ENCODE measurements at regions of chr22 and their contacts with region 1.

Region 1: GRCh38 chr22:20013382-20013871 is 3.2 kb downstream of the ARVCF start:
- DNase-seq: peak; percentile 47 to 85
- H3K4me3 ChIP-seq: no peak overlapping the region
- H3K27ac ChIP-seq: peak overlapping the region; percentile 21; the same call in 1 of the 2 replicates
- H3K4me1 ChIP-seq: peaks cover 0 to 8% (median 3%) of the 10 kb centered on the region in 4 experiments; a peak in 4 of 7 replicates
- H3K27me3 ChIP-seq: peaks cover 11 to 28% (median 24%) of the 10 kb centered on the region in 4 experiments
- CTCF ChIP-seq: peak; percentile 89 to 95 (median 94)
- EP300 ChIP-seq: no peak
- POLR2A ChIP-seq: no peak
- RAD21 ChIP-seq: peak; percentile 89 to 96

Region 2: GRCh38 chr22:19874307-19875060 is 138.9 kb before region 1 on chr22:
- CTCF ChIA-PET with region 1: no interaction called
- POLR2A ChIA-PET with region 1: no interaction called
- DNase-seq: peak in 1 of 2 experiments; percentile 51
- H3K4me3 ChIP-seq: no peak overlapping the region
- H3K27ac ChIP-seq: no peak overlapping the region
- H3K4me1 ChIP-seq: peaks cover 0 to 2% (median 0%) of the 10 kb centered on the region in 4 experiments; a peak in 1 of 7 replicates
- H3K27me3 ChIP-seq: no peaks in the 10 kb centered on the region
- CTCF ChIP-seq: no peak
- EP300 ChIP-seq: no peak
- POLR2A ChIP-seq: no peak; a peak in 1 of 3 replicates
- RAD21 ChIP-seq: no peak

Region 3: DNA sequence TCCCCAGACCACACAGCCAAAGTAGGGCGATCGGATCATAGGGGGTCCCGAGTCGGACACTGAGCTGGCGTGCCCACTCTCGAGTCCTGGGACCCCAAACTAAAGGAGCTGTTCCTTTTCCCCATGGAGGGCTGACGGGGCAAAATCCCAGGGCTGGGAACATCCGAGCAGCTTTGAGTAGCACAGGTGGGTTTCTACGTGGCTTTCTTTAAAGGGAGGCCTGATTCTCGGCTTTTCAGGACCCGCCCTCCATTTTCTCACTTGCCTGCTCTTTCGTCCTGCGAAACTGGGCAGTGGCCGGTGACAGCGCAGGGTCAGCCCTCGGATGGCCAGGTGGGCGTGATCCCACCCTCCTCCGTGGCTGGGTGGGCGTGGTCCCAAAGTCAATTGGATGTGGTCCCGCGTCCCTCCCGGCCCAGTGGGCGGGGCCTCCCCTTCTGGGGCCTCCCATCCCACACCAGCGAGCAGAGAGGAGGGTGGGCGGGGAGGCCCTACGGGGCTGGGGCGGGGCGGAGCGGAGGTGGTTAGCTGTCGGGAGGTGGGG is 54.3 kb before region 1 on chr22:
- CTCF ChIA-PET with region 1: interaction called, 369 read pairs
- POLR2A ChIA-PET with region 1: no interaction called
- DNase-seq: peak; percentile 81 to 98
- H3K4me3 ChIP-seq: peak overlapping the region; percentile 38 to 61 (median 52); a peak in 7 of 8 replicates
- H3K27ac ChIP-seq: no peak overlapping the region
- H3K4me1 ChIP-seq: peaks cover 0 to 23% (median 18%) of the 10 kb centered on the region in 4 experiments; a peak in 6 of 7 replicates
- H3K27me3 ChIP-seq: no peaks in the 10 kb centered on the region
- CTCF ChIP-seq: no peak
- EP300 ChIP-seq: no peak
- POLR2A ChIP-seq: peak in 1 of 2 experiments; percentile 61; a peak in 2 of 3 replicates
- RAD21 ChIP-seq: no peak

Region 4: GRCh38 chr22:19981118-19981955 is 32.1 kb before region 1 on chr22:
- CTCF ChIA-PET with region 1: interaction called, 10 read pairs
- POLR2A ChIA-PET with region 1: interaction called, 6 read pairs
- DNase-seq: no peak
- H3K4me3 ChIP-seq: no peak overlapping the region
- H3K27ac ChIP-seq: no peak overlapping the region
- H3K4me1 ChIP-seq: peaks cover 0 to 8% (median 6%) of the 10 kb centered on the region in 4 experiments; a peak in 5 of 7 replicates
- H3K27me3 ChIP-seq: no peaks in the 10 kb centered on the region
- CTCF ChIP-seq: no peak
- EP300 ChIP-seq: no peak
- POLR2A ChIP-seq: no peak
- RAD21 ChIP-seq: no peak

Region 5: DNA sequence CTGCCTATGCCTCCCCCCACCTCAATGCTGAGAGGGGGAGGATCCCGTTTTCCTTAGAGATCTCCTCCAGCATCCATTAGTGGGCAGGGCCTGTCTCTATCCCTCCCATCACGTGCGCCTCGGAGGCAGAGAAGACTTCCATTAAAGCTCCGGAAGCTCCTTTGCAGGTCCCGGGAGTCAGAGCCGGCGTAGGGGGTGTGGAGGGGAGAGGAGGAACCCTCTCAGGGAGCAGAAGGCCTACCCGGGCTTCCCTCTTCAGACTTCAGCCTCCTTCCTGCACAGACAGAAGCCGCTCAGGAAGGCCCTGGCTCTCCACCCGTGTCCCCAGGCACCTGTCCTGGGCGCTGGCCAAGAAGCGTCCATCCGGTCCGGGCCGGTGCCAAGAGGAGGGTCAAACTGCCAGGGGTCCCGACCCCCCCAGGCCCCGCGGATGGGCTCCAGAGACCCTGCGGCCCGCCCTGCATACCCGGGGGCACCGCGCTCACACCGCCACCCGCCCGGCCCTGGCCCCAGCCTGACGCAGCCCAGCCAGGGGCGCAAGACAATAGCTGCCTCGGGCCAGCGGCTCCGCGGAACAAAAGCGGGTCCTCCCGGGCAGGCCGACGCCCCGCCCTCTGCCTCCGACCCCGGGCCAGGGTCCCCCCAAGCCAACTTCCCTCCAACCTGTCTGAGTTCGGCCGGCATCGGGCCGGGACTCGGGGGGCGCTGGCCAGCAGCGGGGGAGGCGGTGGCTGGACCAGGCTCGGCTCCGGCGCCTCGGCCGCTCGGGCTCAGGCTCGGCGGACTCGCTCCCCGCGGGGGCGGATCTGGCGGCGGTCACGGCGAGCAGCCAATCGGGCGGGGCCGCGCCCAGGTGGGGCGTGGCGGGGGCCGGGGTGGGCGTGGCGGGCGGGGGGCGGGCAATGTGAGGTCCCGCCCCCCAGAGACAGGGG is 26.8 kb before region 1 on chr22:
- CTCF ChIA-PET with region 1: interaction called, 50 read pairs
- POLR2A ChIA-PET with region 1: interaction called, 6 read pairs
- DNase-seq: peak in 1 of 2 experiments; percentile 89
- H3K4me3 ChIP-seq: peak overlapping the region; percentile 74 to 88 (median 82)
- H3K27ac ChIP-seq: peak overlapping the region; percentile 57; the same call in 1 of the 2 replicates
- H3K4me1 ChIP-seq: peaks cover 0 to 17% (median 11%) of the 10 kb centered on the region in 4 experiments; a peak in 5 of 7 replicates
- H3K27me3 ChIP-seq: no peaks in the 10 kb centered on the region
- CTCF ChIP-seq: no peak
- EP300 ChIP-seq: no peak
- POLR2A ChIP-seq: peak in 1 of 2 experiments; percentile 80; a peak in 2 of 3 replicates
- RAD21 ChIP-seq: no peak

Region 6: DNA sequence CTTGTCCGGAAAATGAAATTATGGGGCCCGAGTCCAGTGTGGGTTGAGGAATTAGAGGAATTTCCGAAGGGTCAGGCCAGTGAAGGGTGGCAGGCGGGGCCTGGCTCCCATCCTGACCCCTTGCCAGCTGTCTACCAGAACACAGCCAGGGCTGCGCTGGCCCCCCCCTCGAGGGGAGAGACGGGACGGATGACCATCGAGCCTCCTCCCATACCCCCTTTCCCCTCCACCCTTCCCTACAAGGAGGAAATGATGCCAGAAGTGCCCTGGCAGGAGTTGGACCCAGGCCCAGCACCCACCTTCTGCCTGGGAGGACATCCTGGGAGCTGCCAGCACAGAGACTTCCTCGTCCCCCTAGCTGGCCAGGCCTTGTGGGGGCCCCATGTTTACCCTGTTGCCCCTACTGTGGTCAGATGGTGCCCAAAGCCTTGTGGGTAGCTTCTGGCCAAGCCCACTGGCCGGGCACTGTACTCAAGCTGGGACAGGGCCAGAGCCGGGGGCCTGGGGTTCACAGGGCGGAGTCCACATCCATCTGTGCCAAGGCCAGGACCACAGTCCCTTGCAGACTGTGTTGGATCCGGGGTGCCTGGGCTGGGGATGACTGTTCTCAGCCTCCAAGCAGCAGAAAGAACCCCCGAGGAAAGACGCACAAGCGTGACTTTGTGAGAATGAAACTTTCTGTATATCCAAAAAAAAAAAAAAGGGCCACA is 17.6 kb before region 1 on chr22:
- CTCF ChIA-PET with region 1: interaction called, 50 read pairs
- POLR2A ChIA-PET with region 1: interaction called, 4 read pairs
- DNase-seq: no peak
- H3K4me3 ChIP-seq: no peak overlapping the region
- H3K27ac ChIP-seq: no peak overlapping the region
- H3K4me1 ChIP-seq: peaks cover 4 to 30% (median 18%) of the 10 kb centered on the region in 4 experiments
- H3K27me3 ChIP-seq: no peaks in the 10 kb centered on the region
- CTCF ChIP-seq: no peak
- EP300 ChIP-seq: no peak
- POLR2A ChIP-seq: no peak
- RAD21 ChIP-seq: no peak

Region 7: DNA sequence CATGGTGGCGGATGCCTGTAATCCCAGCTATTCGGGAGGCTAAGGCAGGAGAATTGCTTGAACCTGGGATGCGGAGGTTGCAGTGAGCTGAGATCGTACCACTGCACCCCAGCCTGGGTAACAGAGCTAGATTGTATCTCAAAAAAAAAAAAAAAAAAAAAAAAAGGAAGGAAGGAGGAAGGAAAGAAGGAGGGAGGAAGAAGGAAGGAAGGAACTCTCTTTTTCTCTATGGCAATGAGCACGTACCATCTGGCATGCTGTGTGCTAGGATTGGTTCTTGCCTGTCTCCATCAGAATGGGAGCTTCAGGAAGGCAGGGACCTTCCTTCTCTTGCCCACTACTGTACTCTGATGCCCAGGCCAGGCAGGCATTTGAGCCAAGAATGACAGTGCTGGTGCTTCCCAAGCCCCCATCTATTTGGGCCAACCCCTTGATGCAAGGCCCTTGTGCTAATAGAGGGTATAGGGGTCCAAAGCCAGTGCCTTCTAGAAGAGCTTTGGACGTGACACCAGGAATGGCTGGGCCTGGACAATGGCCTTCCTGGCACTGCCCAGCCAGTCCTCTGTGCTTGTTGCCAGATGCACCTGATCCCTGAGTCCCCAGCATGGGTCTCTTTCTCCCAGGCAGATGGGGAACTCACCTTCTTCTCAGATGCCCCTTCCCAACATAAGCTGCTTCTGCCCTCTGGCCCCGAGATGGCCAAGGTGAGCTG is 56.1 kb after region 1 on chr22:
- CTCF ChIA-PET with region 1: no interaction called
- POLR2A ChIA-PET with region 1: no interaction called
- DNase-seq: no peak
- H3K4me3 ChIP-seq: no peak overlapping the region
- H3K27ac ChIP-seq: no peak overlapping the region
- H3K4me1 ChIP-seq: no peaks in the 10 kb centered on the region
- H3K27me3 ChIP-seq: peaks cover 0 to 3% (median 0%) of the 10 kb centered on the region in 4 experiments; a peak in 3 of 7 replicates
- CTCF ChIP-seq: no peak
- EP300 ChIP-seq: no peak
- POLR2A ChIP-seq: no peak
- RAD21 ChIP-seq: no peak

Region 8: DNA sequence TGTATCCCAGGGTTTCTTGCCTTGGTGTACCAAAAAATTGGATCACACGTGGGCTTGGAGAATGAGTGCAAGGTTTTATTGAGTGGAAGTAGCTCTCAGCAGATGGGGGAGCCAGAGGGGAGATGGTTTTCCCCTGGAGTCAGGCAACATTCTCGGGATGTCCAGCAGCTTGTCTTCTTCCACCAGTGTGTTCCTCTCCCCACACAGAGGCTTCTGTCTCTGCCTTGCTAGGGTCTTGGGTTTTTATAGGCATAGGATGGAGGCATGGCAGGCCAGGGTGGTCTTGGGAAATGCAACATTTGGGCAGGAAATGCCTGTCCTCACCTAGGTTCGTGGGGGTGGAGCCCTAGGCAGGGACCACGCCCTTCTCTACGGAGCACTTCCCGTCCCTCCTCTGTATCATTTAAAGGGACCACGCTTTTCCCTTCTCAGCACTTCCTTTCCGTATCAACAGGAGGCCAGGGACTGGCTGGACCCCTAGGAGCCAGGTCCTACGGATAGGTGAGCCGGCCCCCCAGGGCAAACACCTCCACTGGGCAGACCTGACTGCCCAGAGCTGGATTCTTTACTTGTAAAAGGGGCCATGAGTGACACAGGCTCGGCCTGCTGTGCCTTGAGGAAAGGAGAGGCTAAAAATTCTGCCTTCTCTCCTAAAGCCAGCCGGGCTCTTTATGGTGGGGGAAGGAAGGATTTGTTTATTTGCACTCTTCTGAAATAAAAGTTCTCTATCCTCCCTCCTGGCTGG is 192.7 kb after region 1 on chr22:
- CTCF ChIA-PET with region 1: no interaction called
- POLR2A ChIA-PET with region 1: no interaction called
- DNase-seq: no peak
- H3K4me3 ChIP-seq: no peak overlapping the region
- H3K27ac ChIP-seq: no peak overlapping the region
- H3K4me1 ChIP-seq: peaks cover 0 to 23% (median 16%) of the 10 kb centered on the region in 4 experiments; a peak in 6 of 7 replicates
- H3K27me3 ChIP-seq: no peaks in the 10 kb centered on the region
- CTCF ChIP-seq: no peak
- EP300 ChIP-seq: no peak
- POLR2A ChIP-seq: no peak
- RAD21 ChIP-seq: no peak

Measured in H1 (cell line).